Activated CD4-positive, alpha-beta T cell treated with anti-CD3 and anti-CD28 coated beads, Interleukin-2, amount 10 ng/mL, durations not matched to agents 24 days and 14 days (primary cell): ENCODE measurements at regions of chr3 and their contacts with region 1.

Region 1: GRCh38 chr3:28860307-28860706 is 420.6 kb upstream of the RBMS3 start:
- DNase-seq: no peak
- H3K4me3 Mint-ChIP-seq: no peak overlapping the region
- H3K27ac Mint-ChIP-seq: no peak overlapping the region
- H3K4me1 Mint-ChIP-seq: no peaks in the 10 kb centered on the region
- H3K27me3 Mint-ChIP-seq: peaks cover 6% of the 10 kb centered on the region

Region 2: DNA sequence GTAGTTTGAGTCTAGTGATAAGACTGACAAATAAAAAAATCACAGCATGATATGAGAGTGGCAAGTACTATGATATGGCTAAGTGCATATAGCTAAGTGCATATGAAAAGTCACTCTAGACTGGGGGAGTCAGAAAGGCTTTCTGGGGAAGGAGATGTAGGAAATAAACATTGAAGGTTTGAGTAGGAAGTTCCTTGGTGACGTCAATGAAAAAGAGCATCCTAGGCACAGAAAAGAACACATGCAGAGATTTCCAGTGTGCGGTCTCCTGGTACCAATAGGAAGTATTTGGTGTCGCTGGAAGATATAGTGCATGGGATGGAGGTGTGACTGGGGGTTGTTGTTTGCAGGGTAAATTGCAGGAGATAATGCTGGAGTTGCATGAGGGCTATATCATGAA is 39.3 kb before region 1 on chr3:
- intact Hi-C with region 1: loop called (anchors 2 kb)
- DNase-seq: no peak
- H3K4me3 Mint-ChIP-seq: no peak overlapping the region
- H3K27ac Mint-ChIP-seq: no peak overlapping the region
- H3K4me1 Mint-ChIP-seq: no peaks in the 10 kb centered on the region
- H3K27me3 Mint-ChIP-seq: no peaks in the 10 kb centered on the region